Activated naive CD4-positive, alpha-beta T cell treated with anti-CD3 and anti-CD28 coated beads for 36 hours (primary cell): ENCODE measurements at regions of chr5 and their contacts with region 1.

Region 1: DNA sequence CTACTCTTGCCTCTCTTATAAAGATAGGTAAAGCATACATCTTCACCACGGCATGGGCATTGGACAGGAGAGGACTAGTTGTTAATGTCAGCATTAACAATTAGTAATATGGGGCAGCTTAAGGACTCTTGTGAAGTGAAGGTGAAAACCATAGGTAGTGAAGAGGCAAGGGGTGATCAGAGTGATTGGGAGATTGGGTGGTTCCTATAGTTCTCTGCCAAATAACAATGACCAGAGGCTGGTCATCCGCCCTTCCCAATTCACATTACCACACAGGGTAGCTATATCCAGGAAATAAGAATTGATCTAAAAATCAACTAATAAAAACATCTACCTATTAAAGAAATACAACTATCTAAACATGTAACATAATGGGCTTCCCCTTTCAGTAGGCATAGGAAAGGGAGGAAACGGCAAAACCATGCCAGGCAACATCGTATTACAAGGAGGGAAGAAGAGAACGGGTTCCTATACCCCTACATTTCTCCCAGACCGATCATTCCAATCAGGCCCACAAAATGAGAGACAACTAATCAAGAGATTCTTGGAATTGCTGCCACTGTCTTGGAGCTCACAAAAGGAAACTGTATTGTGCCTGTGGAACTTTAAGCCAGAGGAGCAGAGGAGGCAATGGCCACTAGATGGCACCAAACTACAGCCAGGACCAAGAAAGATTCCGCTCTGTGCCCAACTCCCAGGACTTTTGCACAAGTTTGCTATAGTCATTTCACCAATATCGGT is 121.6 kb downstream of the FBXL17 start:
- DNase-seq: peak; percentile 83
- H3K4me3 Mint-ChIP-seq: peak overlapping the region; percentile 48
- H3K27ac Mint-ChIP-seq: no peak overlapping the region
- H3K4me1 Mint-ChIP-seq: peaks cover 9% of the 10 kb centered on the region
- H3K27me3 Mint-ChIP-seq: no peaks in the 10 kb centered on the region

Region 2: DNA sequence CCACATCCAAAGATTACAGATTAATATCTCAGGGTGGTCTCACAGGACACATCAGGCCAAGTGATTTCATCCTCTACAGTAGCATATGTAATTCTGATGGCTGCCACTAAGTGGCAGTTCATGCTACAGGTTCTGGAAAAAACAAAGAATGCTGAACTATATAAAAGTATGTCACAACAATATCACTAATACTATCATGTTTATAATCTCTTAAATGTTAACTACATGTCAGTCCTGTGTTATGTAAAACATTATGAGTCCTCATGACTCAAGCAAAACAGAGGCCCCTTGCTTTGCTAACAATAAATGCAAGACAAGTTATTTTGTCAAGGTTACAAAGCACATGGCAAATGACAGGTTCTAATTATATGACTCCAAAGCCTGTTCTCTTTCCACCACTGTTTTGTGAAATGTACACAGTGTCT is 111.6 kb before region 1 on chr5:
- CTCF ChIA-PET with region 1: no interaction called
- intact Hi-C with region 1: no loop called
- DNase-seq: no peak
- H3K4me3 Mint-ChIP-seq: no peak overlapping the region
- H3K27ac Mint-ChIP-seq: no peak overlapping the region
- H3K4me1 Mint-ChIP-seq: peaks cover 4% of the 10 kb centered on the region
- H3K27me3 Mint-ChIP-seq: no peaks in the 10 kb centered on the region

Region 3: GRCh38 chr5:108212640-108213346 is 47.5 kb before region 1 on chr5:
- CTCF ChIA-PET with region 1: no interaction called
- intact Hi-C with region 1: no loop called
- DNase-seq: no peak
- H3K4me3 Mint-ChIP-seq: no peak overlapping the region
- H3K27ac Mint-ChIP-seq: no peak overlapping the region
- H3K4me1 Mint-ChIP-seq: no peaks in the 10 kb centered on the region
- H3K27me3 Mint-ChIP-seq: no peaks in the 10 kb centered on the region

Region 4: GRCh38 chr5:108271127-108271526 is 10.8 kb after region 1 on chr5:
- CTCF ChIA-PET with region 1: interaction called, 12 read pairs
- intact Hi-C with region 1: no loop called
- DNase-seq: no peak
- H3K4me3 Mint-ChIP-seq: no peak overlapping the region
- H3K27ac Mint-ChIP-seq: no peak overlapping the region
- H3K4me1 Mint-ChIP-seq: peaks cover 4% of the 10 kb centered on the region
- H3K27me3 Mint-ChIP-seq: no peaks in the 10 kb centered on the region

Region 5: GRCh38 chr5:108278285-108279240 is 18.3 kb after region 1 on chr5:
- CTCF ChIA-PET with region 1: interaction called, 5 read pairs
- intact Hi-C with region 1: loop called (anchors 1 kb)
- DNase-seq: peak; percentile 12
- H3K4me3 Mint-ChIP-seq: no peak overlapping the region
- H3K27ac Mint-ChIP-seq: no peak overlapping the region
- H3K4me1 Mint-ChIP-seq: peaks cover 30% of the 10 kb centered on the region
- H3K27me3 Mint-ChIP-seq: no peaks in the 10 kb centered on the region

Region 6: GRCh38 chr5:108345541-108346171 is 85.4 kb after region 1 on chr5:
- CTCF ChIA-PET with region 1: interaction called, 56 read pairs
- intact Hi-C with region 1: loop called (anchors 1 kb)
- DNase-seq: no peak
- H3K4me3 Mint-ChIP-seq: no peak overlapping the region
- H3K27ac Mint-ChIP-seq: no peak overlapping the region
- H3K4me1 Mint-ChIP-seq: no peaks in the 10 kb centered on the region
- H3K27me3 Mint-ChIP-seq: no peaks in the 10 kb centered on the region

Region 7: GRCh38 chr5:108451269-108451668 is 191.0 kb after region 1 on chr5:
- CTCF ChIA-PET with region 1: no interaction called
- intact Hi-C with region 1: loop called (anchors 5 kb)
- DNase-seq: no peak
- H3K4me3 Mint-ChIP-seq: no peak overlapping the region
- H3K27ac Mint-ChIP-seq: no peak overlapping the region
- H3K4me1 Mint-ChIP-seq: no peaks in the 10 kb centered on the region
- H3K27me3 Mint-ChIP-seq: peaks cover 5% of the 10 kb centered on the region